Body of pancreas (tissue), 4 donors: ENCODE measurements at regions of chr14 and their contacts with region 1.

Region 1: GRCh38 chr14:53295985-53296582 is 143.0 kb upstream of the DDHD1 start:
- DNase-seq: no peak
- ATAC-seq: peak; percentile 33
- H3K4me3 ChIP-seq: no peak overlapping the region
- H3K27ac ChIP-seq: no peak overlapping the region
- H3K4me1 ChIP-seq: no peaks in the 10 kb centered on the region
- H3K27me3 ChIP-seq: no peaks in the 10 kb centered on the region
- CTCF ChIP-seq: peak in 6 of 7 experiments; percentile 50 to 78 (median 58)
- POLR2A ChIP-seq: no peak

Region 2: GRCh38 chr14:54347997-54348611 is 1052.0 kb after region 1 on chr14:
- intact Hi-C with region 1: loop called (anchors 10 kb)
- DNase-seq: peak in 1 of 4 donors; percentile 42
- ATAC-seq: peak; percentile 75
- H3K4me3 ChIP-seq: no peak overlapping the region
- H3K27ac ChIP-seq: no peak overlapping the region
- H3K4me1 ChIP-seq: no peaks in the 10 kb centered on the region
- H3K27me3 ChIP-seq: no peaks in the 10 kb centered on the region
- CTCF ChIP-seq: peak; percentile 28 to 87 (median 75)
- POLR2A ChIP-seq: no peak